AG04449 (cell line): ENCODE measurements at regions of chr6 and their contacts with region 1.

Region 1: GRCh38 chr6:30717042-30717844 is at the start of gene MDC1:
- DNase-seq: peak; percentile 100
- H3K4me3 ChIP-seq: peak within 1 kb of the TSS; percentile 71
- CTCF ChIP-seq: peak; percentile 31

Region 2: GRCh38 chr6:30150671-30151395 is 566.4 kb before region 1 on chr6:
- CTCF ChIA-PET with region 1: no interaction called
- POLR2A ChIA-PET with region 1: no interaction called
- DNase-seq: no peak
- H3K4me3 ChIP-seq: no peak overlapping the region
- CTCF ChIP-seq: no peak

Region 3: GRCh38 chr6:30672445-30673253 is 44.6 kb before region 1 on chr6 and contains the start of gene DHX16:
- CTCF ChIA-PET with region 1: interaction called, 504 read pairs
- POLR2A ChIA-PET with region 1: interaction called, 24 read pairs
- DNase-seq: peak; percentile 90
- H3K4me3 ChIP-seq: peak within 1 kb of the TSS; percentile 97
- CTCF ChIP-seq: peak; percentile 61

Region 4: GRCh38 chr6:30686908-30687658 is 30.2 kb before region 1 on chr6:
- CTCF ChIA-PET with region 1: interaction called, 504 read pairs
- POLR2A ChIA-PET with region 1: interaction called, 16 read pairs
- DNase-seq: peak; percentile 69
- H3K4me3 ChIP-seq: peak overlapping the region; percentile 89
- CTCF ChIP-seq: no peak

Region 5: DNA sequence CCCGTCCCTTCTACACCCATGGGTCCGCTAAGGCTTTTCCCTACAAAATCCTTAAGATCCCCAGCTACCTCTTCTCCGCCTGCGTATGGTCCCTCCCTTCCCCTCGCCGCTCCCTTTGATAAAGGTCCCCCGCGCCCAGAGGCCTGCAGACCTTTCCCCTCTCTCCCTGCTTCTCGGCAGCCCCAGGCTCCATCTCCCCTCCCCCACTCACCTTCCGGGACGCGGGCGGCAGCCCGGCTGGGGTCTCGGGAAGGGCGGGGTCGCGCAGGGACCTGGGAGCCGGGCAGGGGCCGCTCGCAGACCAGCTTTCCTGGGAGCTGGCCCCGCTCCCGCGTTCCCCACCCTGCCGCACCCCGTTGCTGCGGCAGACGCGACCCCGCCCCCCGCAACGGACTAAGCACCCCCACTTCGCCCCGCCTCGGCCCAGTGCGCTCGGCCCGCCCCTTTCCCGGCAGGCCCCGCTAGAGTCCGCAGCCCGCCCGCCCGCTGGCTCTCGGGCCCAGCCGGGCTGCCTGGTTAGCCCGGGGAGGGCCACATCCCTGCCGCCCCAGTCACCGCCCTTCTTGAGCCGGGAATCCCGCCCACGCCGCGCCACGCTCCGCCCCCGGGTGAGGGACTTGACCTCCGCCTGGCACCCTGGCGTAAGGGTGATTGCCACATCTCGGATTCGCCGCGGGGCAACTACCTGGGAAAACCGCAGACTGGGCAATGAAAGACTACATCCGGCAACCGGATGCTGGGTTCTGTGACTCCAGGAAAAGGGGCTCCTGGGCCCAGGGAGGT is 25.3 kb after region 1 on chr6 and contains the start of gene FLOT1:
- CTCF ChIA-PET with region 1: interaction called, 67 read pairs
- POLR2A ChIA-PET with region 1: interaction called, 20 read pairs
- DNase-seq: no peak
- H3K4me3 ChIP-seq: peak within 1 kb of the TSS; percentile 99
- CTCF ChIP-seq: no peak

Region 6: DNA sequence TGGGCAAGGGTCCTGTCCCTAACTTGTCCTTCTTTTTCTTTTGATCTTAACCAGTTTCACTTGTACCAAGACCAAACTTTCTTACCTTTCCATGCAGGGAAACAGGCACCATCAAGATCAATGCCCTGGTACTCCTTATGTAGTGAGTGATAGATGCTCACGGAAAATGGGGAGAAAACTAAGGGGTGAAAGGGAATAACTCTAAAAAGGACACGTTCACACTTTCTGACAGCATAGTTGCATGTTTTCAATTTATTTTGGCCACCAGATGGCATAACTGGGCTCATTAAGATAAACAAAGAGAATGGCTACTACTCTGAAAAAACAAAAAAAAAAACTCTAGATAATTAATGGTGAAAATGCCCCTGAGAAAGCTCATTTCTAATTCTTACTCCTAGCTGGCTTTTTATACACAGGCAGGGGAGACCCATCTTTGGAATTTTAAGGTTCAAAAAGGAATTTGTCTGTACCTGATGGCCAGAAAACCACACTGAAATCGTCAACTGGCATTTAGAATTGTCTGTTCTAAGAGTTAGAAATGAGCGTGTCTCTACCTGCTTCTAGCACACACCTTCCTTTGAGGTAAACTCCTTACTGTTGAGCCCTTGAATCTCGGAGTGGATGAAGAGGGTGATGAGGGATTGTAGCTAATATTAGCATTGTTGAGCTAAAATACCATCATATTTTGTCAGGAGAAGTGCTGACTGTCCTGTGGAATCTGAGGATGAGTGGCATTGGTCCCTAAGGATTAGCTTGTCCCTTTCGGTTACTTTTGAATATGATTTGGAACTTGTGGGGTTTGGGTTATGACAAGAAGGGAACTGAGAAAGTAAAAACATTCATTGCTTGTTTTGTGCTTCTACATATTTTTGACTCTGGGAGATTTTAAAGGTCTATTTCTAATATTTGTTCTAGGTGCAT is 104.9 kb after region 1 on chr6:
- CTCF ChIA-PET with region 1: interaction called, 32 read pairs
- POLR2A ChIA-PET with region 1: interaction called, 3 read pairs
- DNase-seq: no peak
- H3K4me3 ChIP-seq: no peak overlapping the region
- CTCF ChIP-seq: peak; percentile 33

Region 7: GRCh38 chr6:30883685-30884520 is 166.7 kb after region 1 on chr6 and contains the start of gene DDR1:
- CTCF ChIA-PET with region 1: interaction called, 13 read pairs
- POLR2A ChIA-PET with region 1: interaction called, 6 read pairs
- DNase-seq: no peak
- H3K4me3 ChIP-seq: peak within 1 kb of the TSS; percentile 82
- CTCF ChIP-seq: no peak

Region 8: DNA sequence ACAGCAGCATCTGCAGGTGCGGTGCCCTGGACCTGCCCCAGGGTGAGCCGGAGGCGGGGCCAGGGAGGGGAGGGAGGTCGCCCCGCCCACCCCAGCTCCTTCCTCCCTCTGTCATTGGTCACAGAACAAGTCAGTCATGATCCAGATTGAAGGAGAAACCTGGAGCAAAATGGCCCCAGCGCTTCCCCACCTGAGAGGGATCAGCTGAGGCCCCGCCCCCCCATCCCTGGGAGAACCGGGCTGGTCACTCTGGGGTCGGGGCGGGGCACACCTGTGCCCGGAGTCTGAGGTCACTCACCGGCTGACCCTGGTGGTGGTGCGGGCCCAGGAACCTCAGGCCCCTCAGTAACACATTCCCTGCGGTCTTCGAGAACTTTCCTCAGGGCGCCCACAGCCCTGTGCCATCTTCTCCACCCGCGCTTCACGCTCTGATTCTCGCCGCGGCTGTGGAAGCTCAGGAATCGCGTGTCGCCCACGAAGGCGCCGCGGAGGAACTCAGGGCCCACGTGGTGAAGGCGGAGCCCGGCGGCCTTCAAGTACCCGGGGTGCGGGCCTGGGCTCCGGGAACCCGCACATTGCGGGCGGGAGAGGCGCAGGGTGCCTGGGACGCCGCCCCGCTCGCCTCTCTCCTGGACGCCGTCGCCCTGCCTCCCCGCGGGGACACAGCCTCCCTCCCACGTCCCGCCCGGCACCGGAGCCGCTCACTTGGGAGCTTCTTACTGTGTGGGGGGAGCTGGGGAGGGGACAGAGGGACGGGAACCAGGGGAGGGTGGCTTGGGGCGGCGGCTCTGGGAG is 591.0 kb after region 1 on chr6:
- CTCF ChIA-PET with region 1: no interaction called
- POLR2A ChIA-PET with region 1: no interaction called
- DNase-seq: no peak
- H3K4me3 ChIP-seq: no peak overlapping the region
- CTCF ChIP-seq: no peak